ENCODE measurements at regions of chr22 and their contacts with region 1.

Region 1: GRCh38 chr22:46006379-46007002 is 29.5 kb upstream of the WNT7B start:
- DNase-seq: peak; percentile 42
- H3K4me3 ChIP-seq: 0 out of 2 replicates have a peak overlapping the region, but pooled peaks have one; percentile 8
- CTCF ChIP-seq: peak; percentile 91

Region 2: DNA sequence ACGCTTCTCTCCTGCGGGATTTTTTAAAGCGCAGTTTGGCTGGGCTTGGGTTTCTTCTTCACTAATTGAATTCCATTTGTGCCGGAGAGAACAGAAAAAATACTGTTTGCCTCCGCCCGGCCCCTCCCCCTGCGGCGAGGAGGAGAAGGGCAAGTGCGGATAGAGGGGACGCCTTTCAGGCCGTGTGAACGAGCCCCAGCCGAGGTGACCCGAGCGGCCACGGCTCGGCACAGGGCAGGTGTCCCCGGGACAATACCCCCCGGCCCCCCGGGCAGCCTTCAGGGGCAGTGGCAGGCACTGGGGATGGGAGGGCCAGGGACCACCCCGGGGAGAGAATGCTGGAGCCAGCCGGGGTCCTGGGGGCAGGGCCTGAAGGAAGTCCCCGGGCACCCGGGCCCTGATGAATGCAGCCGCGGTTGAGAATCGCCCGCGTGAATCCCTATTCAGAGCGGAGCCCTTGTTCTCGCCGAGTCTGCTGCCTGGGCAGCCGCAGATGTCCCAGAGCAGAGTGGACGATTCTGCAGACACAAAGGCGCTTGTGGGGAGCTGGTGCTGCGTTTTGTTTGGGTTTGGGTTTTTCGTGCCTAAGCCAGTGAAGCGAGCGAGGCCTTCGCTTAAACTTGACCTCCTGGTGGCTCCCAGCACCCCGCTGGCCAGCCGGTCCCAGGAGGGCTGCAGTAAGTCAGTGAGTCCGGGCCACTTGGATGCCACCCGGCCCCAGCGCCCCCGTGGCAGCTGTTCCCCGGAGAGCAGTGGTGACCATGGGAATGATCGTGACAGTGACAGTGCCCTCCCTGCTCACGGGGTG is 125.6 kb before region 1 on chr22:
- CTCF ChIA-PET with region 1: no interaction called
- POLR2A ChIA-PET with region 1: no interaction called
- DNase-seq: no peak
- H3K4me3 ChIP-seq: no peak overlapping the region; the same call in 1 of the 2 replicates
- CTCF ChIP-seq: no peak

Region 3: GRCh38 chr22:46035742-46036557 is 29.5 kb after region 1 on chr22:
- CTCF ChIA-PET with region 1: interaction called, 17 read pairs
- POLR2A ChIA-PET with region 1: no interaction called
- DNase-seq: peak; percentile 83
- H3K4me3 ChIP-seq: peak overlapping the region; percentile 82
- CTCF ChIP-seq: no peak

Region 4: DNA sequence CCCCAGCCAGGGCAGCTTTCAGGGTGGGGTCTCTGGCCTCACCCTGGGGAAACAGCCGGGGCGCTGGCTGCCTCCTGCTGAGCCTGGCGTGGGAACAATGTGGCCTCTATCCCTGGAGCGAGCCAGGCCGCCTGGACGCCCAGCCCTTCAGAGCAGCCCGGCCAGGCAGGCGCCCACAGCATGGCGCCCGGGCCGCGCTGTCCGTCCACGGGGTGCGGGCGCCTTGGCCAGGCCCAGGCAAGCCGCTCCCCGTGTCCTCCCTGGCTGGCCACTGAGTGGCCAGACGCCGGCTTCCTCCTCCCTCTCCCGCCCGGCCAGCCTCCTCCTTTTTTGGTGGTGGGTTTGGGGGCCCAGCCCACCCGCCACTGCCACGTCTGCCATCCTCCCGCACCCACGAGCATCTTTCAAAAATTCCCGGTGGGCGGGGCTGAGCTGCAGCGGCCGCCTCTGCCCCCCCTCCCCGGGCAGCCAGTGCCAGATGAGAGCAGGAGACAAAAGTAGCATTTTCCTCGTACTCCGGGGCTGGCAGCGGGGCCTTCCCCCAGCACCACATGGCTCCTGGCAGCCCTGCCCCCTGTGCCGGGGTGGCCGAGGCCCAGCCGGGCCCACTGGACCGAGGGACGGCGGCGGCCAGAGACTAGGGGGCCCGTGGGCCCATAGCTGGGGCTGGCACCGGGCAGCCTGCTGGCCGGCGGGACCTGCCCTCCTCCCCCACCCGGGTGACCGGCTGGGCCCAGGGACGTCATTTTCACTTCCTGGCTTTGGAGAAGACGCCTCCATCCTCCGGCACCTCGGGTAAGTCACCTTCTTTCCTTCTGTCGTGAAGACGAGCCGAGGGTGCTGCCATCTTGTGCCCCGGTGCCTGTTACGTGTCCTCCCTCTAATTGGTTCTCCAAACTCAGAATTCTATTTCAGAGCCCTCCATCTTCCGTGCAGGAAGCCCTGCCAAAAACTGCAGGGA is 73.7 kb after region 1 on chr22:
- CTCF ChIA-PET with region 1: interaction called, 75 read pairs
- POLR2A ChIA-PET with region 1: interaction called, 4 read pairs
- DNase-seq: no peak
- H3K4me3 ChIP-seq: peak overlapping the region; percentile 61
- CTCF ChIP-seq: no peak

Region 5: DNA sequence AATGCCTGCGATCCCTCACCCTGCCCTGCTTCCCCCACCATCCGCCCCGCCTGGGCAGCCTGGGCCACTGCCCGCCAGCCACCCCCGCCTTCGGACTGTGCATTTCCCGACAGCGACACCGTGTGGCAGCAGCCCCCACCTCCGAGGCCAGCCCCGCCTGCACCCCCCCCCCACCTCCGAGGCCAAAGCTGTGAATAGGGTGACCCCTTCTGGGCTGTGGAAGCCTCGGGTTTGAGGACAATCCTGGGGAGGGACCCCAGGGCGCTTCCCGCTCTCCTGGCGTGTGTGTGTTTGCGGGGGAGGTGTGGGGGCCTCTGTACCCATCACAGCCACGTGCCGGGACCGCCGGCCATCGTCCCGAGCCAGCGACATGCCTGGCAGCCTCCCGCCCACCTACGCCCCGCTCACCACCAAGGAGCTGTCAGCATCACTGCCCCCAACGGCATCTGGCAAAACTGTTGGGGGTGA is 110.0 kb after region 1 on chr22:
- CTCF ChIA-PET with region 1: interaction called, 345 read pairs
- POLR2A ChIA-PET with region 1: interaction called, 9 read pairs
- DNase-seq: no peak
- H3K4me3 ChIP-seq: no peak overlapping the region
- CTCF ChIP-seq: peak; percentile 76

Region 6: GRCh38 chr22:46296257-46297150 is 290.0 kb after region 1 on chr22 and contains the start of gene GTSE1:
- CTCF ChIA-PET with region 1: interaction called, 17 read pairs
- POLR2A ChIA-PET with region 1: no interaction called
- DNase-seq: peak; percentile 76
- H3K4me3 ChIP-seq: peak within 1 kb of the TSS; percentile 71
- CTCF ChIP-seq: peak; percentile 25

Region 7: DNA sequence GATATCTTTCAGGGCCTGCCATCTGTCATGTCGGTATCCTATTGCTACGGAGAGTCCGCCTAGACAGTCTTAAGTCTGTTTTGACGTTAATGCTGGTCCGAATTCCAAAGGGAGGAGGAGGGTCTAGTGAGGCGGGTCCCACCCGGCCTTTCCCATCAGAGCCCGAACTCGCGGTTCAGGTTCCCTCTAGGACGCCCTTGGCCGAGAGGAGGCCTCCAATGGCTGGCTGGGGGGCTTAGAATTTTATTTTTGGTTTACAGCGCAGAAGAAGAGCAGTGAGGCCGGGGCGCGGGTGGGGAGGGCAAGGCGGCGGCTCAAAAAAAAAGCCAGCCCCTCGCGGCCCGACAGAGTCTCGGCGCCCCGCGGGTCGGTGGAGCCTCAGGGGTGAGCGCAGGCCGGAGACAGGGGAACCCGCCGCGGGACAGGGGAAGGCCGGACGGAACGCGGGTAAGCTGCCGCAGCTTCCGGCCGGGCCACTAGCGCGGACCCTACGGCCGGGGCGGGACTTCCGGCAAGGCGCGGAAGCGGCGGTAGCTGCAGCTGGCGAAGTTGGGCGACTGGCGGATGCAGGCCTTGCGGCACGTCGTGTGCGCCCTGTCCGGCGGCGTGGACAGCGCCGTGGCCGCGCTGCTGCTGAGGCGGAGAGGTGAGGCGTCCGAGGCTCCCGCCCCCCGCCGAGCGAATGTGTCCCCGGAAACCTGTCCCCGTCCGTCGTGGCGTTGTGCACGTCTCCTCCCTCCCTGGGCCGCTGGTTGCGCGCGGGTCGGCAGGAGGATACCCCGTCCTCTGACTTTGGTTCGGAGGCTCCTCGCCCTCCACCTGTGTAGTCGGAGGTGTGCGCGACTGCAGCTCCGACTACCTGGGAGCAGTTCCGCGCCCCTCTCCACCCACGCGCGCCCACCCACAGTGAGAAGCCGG is 329.0 kb after region 1 on chr22 and contains the start of gene TRMU:
- CTCF ChIA-PET with region 1: interaction called, 11 read pairs
- POLR2A ChIA-PET with region 1: no interaction called
- DNase-seq: peak; percentile 29
- H3K4me3 ChIP-seq: peak within 1 kb of the TSS; percentile 90
- CTCF ChIP-seq: no peak

Measured in AG04449 (cell line).